Common myeloid progenitor, CD34-positive (primary cell): ENCODE measurements at regions of chr16 and their contacts with region 1.

Region 1: DNA sequence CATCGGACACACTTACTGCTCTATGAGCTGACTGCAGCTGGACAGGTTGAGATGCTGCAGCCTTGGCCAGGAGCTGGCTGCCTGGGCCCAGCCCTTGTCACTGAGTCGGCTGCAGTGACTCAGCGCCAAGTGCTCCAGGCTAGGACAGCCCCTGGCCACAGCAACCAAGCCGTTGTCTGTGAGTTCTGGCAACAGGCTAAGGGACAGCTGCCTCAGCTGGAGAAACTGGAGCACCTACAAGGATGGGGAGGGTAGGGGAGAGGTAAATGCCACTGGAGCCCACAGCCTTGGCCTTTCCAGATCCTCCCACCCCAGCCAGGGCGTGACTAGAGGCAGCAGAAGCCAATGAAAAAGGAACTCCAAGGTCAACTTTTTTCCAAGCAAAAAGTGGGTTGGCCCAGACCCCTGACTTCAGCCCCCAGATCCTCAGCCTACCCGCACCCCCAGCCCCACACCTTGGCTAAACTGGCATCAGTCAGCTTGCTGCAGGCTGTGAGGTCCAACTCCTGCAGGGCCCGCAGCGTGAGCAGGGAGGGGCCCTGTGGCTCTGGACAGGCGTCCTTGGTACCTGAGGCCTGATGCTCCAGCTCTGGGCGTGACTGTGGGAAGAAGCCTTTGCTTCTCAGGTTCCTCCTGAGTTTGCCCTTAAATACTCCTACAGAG is 9.1 kb downstream of the ELMO3 start:
- DNase-seq: no peak
- H3K4me3 ChIP-seq: no peak overlapping the region
- H3K27ac ChIP-seq: no peak overlapping the region
- H3K4me1 ChIP-seq: peaks cover 0 to 4% (median 0%) of the 10 kb centered on the region in 4 experiments
- H3K27me3 ChIP-seq: no peaks in the 10 kb centered on the region

Region 2: DNA sequence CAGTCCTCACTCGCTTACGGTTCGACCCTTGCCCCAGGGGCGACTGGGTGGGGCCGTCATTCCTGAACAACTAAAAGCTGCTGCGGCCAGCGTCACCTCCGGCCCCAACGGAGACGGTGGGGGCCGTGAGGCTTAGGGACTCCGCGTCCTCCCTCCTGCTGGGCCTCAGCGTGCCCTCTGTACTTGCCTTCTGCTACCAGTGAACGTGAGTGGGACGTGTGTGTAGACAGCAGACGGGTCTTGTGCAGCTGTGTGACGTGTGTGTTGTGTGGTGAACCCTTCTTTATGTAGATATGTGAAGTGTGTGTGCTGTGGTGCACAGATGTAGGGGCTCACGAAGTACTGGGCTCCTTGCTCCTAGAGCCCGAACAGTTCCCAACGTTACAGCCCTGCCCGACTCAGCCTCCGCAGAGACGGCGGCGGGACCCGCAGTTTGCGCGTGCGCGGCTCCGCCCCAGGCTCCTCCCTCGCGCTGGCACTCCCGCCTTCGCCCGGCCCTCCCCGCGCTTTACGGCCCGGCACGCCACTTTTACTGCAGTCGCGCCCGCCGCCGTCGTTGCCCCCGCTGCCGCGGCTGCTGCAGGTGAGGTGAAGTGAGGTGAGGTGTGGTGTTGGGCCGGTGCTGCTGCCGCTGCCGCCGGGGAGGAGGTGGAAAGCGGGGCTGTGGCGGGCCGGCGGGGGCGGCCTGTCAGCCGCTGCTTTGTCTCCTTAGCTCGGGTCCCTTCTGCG is 98.4 kb before region 1 on chr16 and contains the start of gene PHAF1:
- CTCF ChIA-PET with region 1: no interaction called
- POLR2A ChIA-PET with region 1: no interaction called
- DNase-seq: peak; percentile 89 to 93 (median 92)
- H3K4me3 ChIP-seq: peak within 1 kb of the TSS; percentile 83 to 98 (median 93)
- H3K27ac ChIP-seq: peak within 1 kb of the TSS; percentile 40 to 85
- H3K4me1 ChIP-seq: peaks cover 9 to 39% (median 27%) of the 10 kb centered on the region in 4 experiments
- H3K27me3 ChIP-seq: no peaks in the 10 kb centered on the region

Region 3: GRCh38 chr16:67191995-67192681 is 15.8 kb before region 1 on chr16 and contains the start of gene E2F4:
- CTCF ChIA-PET with region 1: interaction called, 17 read pairs
- POLR2A ChIA-PET with region 1: no interaction called
- DNase-seq: peak; percentile 91 to 96 (median 96)
- H3K4me3 ChIP-seq: peak within 1 kb of the TSS; percentile 72 to 98 (median 91)
- H3K27ac ChIP-seq: peak within 1 kb of the TSS; percentile 66 to 90
- H3K4me1 ChIP-seq: peaks cover 0 to 22% (median 19%) of the 10 kb centered on the region in 4 experiments
- H3K27me3 ChIP-seq: peaks cover 0 to 1% (median 0%) of the 10 kb centered on the region in 5 experiments

Region 4: DNA sequence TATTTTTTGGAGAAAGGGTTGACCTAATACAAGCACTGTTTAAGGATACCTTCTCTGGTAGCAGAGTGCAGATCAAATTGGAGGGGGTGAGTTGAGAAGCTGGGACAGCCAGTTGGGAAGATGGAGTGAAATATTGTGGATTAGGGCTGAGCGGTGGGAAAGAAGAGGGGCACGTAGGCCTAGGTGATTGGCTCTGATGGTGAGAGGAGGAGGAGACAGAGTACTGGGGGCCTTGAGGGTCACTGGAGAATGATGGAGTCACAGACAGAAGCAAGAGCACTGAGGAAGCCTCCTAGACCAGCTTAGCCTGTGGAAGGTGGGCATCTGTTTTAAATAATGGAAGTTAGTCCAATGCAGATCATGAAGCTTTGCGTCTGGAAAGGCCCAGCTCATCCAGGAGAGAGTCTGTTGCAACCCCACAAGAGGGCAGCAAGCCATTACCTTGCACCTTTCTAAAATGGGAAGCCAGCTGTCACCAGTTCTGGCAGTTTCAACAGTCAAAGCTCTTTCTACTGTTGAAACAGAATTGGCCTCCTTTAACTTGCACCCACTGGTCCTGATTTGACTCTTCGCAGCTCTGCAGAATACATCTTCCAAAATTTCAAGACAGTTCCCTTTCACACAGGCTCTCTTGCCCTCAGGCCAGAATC is 52.6 kb after region 1 on chr16:
- CTCF ChIA-PET with region 1: no interaction called
- POLR2A ChIA-PET with region 1: no interaction called
- DNase-seq: peak; percentile 63 to 83 (median 80)
- H3K4me3 ChIP-seq: no peak overlapping the region
- H3K27ac ChIP-seq: no peak overlapping the region
- H3K4me1 ChIP-seq: peaks cover 0 to 3% (median 0%) of the 10 kb centered on the region in 4 experiments
- H3K27me3 ChIP-seq: peaks cover 0 to 3% (median 0%) of the 10 kb centered on the region in 5 experiments